BJ (cell line): ENCODE measurements at regions of chr19 and their contacts with region 1.

Region 1: DNA sequence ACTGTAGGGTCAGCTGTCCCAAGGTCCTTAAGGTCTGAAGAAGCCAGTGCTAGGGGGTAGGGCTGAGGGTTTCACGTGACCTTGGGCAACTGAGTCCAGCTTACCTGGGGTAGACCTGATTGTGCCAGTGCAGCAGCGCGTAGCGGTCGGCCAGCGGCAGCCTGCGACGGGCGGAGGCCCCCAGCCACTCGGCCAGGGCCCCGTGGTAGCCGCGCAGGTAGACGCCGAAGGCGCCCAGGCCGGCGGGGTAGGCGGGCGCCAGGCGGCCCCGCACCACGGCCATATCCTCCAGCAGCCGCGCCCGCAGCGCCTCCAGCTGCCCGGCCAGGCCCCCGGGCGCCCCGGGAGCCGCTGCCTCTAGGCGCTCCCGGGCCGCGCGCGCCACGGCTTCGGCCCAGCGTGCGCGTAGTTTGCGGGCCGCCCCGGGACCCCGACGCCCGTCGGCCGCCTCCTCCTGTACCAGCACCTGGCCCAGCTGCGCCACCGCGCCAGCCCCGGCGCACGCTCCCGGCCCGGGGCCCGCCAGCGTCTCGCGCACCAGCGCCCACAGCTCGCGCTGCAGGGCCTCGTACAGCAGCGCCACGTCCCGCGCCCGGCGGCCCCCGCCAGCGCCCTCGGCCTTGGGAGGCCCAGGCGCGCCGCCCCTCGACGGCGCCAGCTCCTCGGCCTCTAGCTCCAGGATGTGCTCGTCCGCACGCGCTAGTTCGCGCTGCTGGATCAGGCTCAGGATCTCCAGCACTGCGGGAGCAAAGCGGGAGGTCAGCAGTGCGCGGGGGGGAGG is 10.9 kb downstream of the EXOC3L2 start:
- DNase-seq: no peak
- H3K4me3 ChIP-seq: no peak overlapping the region
- H3K27me3 ChIP-seq: peaks cover 3% of the 10 kb centered on the region
- CTCF ChIP-seq: no peak

Region 2: GRCh38 chr19:45250832-45251451 is 16.7 kb after region 1 on chr19 and contains the start of gene MARK4:
- CTCF ChIA-PET with region 1: interaction called, 6 read pairs
- POLR2A ChIA-PET with region 1: interaction called, 19 read pairs
- DNase-seq: no peak
- H3K4me3 ChIP-seq: peak within 1 kb of the TSS; percentile 84
- H3K27me3 ChIP-seq: no peaks in the 10 kb centered on the region
- CTCF ChIP-seq: no peak
- polyA plus RNA-seq, gene MARK4: 10.9 and 17.1 TPM in 2 replicates